Activated naive CD4-positive, alpha-beta T cell treated with anti-CD3 and anti-CD28 coated beads, Interleukin-2, amount 10 ng/mL, durations not matched to agents 7 days and 5 days (primary cell): ENCODE measurements at regions of chr4 and their contacts with region 1.

Region 1: GRCh38 chr4:70704331-70705145 is 16.2 kb downstream of the UTP3 start:
- DNase-seq: peak; percentile 75
- H3K4me3 Mint-ChIP-seq: peak overlapping the region; percentile 88
- H3K27ac Mint-ChIP-seq: peak overlapping the region; percentile 91
- H3K4me1 Mint-ChIP-seq: peaks cover 40% of the 10 kb centered on the region
- H3K27me3 Mint-ChIP-seq: no peaks in the 10 kb centered on the region

Region 2: GRCh38 chr4:70651864-70652506 is 52.6 kb before region 1 on chr4:
- CTCF ChIA-PET with region 1: interaction called, 10 read pairs
- DNase-seq: peak; percentile 30
- H3K4me3 Mint-ChIP-seq: no peak overlapping the region
- H3K27ac Mint-ChIP-seq: no peak overlapping the region
- H3K4me1 Mint-ChIP-seq: peaks cover 13% of the 10 kb centered on the region
- H3K27me3 Mint-ChIP-seq: peaks cover 18% of the 10 kb centered on the region

Region 3: GRCh38 chr4:70687821-70688794 is 16.4 kb before region 1 on chr4 and contains the start of gene UTP3:
- CTCF ChIA-PET with region 1: interaction called, 14 read pairs
- DNase-seq: peak; percentile 95
- H3K4me3 Mint-ChIP-seq: peak within 1 kb of the TSS; percentile 92
- H3K27ac Mint-ChIP-seq: peak within 1 kb of the TSS; percentile 96
- H3K4me1 Mint-ChIP-seq: peaks cover 55% of the 10 kb centered on the region
- H3K27me3 Mint-ChIP-seq: no peaks in the 10 kb centered on the region

Region 4: DNA sequence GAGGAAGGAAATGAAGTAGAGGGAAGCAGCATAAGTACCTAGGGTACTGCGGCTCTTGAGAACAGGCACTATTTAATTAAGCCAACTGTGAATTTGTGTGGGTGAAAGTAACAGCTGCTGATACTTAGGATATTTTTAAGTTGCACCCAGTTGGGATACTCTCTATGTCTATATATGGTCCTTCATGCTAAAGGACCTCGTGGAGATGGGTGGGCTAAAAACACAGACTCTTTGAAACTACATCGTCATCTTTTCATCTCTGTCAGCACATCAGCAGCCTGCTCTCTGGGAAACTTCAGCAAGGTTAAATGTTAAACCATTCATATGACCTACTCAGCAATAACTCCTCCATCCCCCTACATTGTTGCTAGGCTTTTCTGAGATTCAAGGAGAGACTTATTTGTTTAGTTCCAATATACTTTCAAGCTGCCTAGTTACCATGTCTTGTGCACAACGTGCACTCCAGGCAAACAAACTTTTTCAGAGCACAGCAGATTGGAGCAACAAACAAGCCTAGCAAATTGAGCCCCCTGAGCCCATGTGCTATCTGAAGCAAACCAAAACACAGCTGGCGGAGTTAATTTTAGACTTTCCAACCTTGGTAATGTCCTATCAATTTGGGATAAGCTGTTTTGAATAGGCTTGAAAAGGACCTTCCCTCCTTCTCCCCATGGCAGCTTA is 191.4 kb after region 1 on chr4:
- CTCF ChIA-PET with region 1: no interaction called
- DNase-seq: no peak
- H3K4me3 Mint-ChIP-seq: no peak overlapping the region
- H3K27ac Mint-ChIP-seq: no peak overlapping the region
- H3K4me1 Mint-ChIP-seq: no peaks in the 10 kb centered on the region
- H3K27me3 Mint-ChIP-seq: no peaks in the 10 kb centered on the region